Activated naive CD4-positive, alpha-beta T cell treated with anti-CD3 and anti-CD28 coated beads, Interleukin-2, amount 10 ng/mL, durations not matched to agents 7 days and 5 days (primary cell): ENCODE measurements at regions of chr22 and their contacts with region 1.

Region 1: DNA sequence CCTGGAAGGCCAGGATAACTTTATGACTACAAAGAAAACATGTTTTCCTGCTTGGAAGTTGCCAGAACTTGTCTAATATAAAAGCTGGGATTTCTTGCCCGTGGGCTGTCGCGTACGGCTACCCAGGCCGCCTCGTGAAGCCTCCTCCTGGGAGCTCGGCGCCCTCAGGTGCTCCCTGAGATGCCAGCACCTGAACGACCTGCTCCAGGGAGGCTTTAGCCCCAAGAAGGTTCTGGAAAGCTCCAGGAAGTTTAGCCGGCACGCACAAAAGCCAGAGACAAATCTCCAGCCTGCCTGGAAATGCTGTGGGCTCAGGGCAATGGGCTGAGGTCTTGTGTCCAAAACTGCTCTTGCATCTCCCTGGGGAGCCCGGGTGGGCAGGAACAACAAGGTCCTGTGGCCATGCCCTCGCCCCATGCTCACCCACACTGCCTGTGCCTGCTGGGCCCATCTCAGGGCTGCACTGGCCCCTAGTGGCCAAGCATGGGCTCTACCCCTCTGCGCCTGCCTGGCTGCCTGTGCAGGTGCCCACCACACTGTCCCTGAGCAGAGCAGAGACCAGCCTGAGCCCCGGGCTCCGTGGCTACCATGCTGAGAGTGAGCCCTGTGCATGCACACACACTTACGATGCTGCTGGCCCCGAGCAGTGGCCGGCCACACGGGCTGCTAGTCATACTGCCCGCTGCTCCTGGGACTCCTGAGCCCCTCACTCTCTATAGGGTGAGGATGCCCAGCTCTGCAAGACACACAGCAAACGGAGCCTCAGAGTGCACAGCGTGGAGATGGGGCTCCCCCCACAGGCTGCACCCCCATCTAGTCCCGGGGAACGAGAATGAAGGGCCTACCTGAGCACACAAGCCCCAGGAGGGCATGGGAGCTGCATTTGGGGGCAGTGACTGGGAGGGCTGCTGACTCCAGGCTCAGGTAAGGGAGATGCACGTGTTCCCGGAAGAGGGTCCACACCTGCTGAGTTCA is 4.9 kb upstream of the CELSR1 start:
- DNase-seq: peak; percentile 79
- H3K4me3 Mint-ChIP-seq: no peak overlapping the region
- H3K27ac Mint-ChIP-seq: no peak overlapping the region
- H3K4me1 Mint-ChIP-seq: peaks cover 9% of the 10 kb centered on the region
- H3K27me3 Mint-ChIP-seq: peaks cover 74% of the 10 kb centered on the region

Region 2: GRCh38 chr22:46367707-46368191 is 174.5 kb before region 1 on chr22:
- CTCF ChIA-PET with region 1: interaction called, 51 read pairs
- DNase-seq: peak; percentile 81
- H3K4me3 Mint-ChIP-seq: no peak overlapping the region
- H3K27ac Mint-ChIP-seq: no peak overlapping the region
- H3K4me1 Mint-ChIP-seq: peaks cover 14% of the 10 kb centered on the region
- H3K27me3 Mint-ChIP-seq: peaks cover 44% of the 10 kb centered on the region